Naive thymus-derived CD8-positive, alpha-beta T cell (primary cell): ENCODE measurements at regions of chr18 and their contacts with region 1.

Region 1: DNA sequence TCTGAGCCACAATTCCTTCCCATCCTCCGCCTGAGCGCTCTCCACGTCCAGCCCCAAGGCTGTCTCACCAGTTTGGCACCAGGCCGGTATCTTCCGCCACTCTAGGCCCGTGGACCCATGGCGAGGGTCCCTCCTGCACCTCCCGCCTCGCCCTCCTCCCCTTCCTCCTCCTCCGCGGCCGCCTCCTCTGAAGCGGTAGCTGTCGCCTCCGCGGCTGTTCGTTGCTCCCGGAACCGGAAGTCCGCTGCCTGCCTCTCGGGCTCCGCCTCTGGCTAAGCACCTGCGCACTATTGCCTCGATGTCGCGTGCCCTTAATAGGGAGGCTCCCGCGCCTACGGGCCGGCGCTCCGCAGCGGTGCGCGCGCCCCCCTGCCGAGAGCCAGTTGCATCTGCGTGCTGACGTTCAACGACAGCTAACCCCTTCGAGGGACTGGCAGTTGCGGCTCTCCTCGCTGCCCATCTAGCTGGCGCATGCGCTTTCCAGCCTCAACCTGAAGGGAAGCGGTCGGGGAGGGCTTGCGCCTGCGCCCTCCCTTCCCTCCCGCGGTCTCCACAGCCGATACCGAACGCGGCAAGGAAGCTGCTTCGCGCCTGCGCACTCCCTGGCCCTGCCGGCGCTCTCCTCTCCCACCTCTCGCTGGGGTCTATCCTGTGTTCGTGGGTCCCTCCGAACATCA is at the start of gene MBD1:
- DNase-seq: peak; percentile 93 to 99 (median 96)
- ATAC-seq: peak; percentile 91 to 93
- H3K4me3 Mint-ChIP-seq: peak within 1 kb of the TSS; percentile 94 to 99 (median 97)
- H3K27ac Mint-ChIP-seq: peak within 1 kb of the TSS; percentile 94 to 99 (median 98)
- H3K4me1 Mint-ChIP-seq: peaks cover 33 to 60% (median 45%) of the 10 kb centered on the region in 4 donors
- H3K27me3 Mint-ChIP-seq: no peaks in the 10 kb centered on the region
- polyA plus RNA-seq, gene MBD1: 22.5 to 39.9 (median 25.2) TPM

Region 2: DNA sequence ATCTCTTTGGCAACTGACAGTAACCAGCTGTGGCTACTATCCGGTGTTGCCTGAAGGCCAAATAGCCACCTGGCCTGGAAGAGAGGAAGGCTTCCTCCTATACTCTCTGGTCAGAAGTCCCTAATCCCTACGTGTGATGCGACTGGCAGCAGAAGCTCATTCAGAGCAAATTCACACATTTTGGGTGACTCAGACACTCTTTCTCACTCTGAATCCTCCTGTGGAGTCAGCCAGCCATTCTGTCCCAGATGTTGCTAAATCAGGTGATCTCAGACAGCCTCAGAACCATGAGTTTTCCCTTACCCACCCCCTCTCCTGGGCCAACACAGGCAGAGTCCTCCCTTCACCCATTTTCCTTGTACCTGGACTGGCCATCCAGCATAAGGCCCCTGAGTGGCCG is 49.8 kb before region 1 on chr18:
- POLR2A ChIA-PET with region 1: no interaction called
- DNase-seq: no peak
- ATAC-seq: no peak
- H3K4me3 Mint-ChIP-seq: no peak overlapping the region
- H3K27ac Mint-ChIP-seq: no peak overlapping the region
- H3K4me1 Mint-ChIP-seq: no peaks in the 10 kb centered on the region
- H3K27me3 Mint-ChIP-seq: peaks cover 0 to 29% (median 22%) of the 10 kb centered on the region in 5 donors

Region 3: GRCh38 chr18:50266248-50266704 is 15.2 kb before region 1 on chr18 and contains the start of gene CFAP53:
- POLR2A ChIA-PET with region 1: interaction called, 29 read pairs
- DNase-seq: peak; percentile 63 to 93 (median 84)
- ATAC-seq: peak; percentile 83 to 87
- H3K4me3 Mint-ChIP-seq: peak within 1 kb of the TSS; percentile 81 to 97 (median 91)
- H3K27ac Mint-ChIP-seq: peak within 1 kb of the TSS; percentile 54 to 95 (median 93)
- H3K4me1 Mint-ChIP-seq: peaks cover 6 to 28% (median 22%) of the 10 kb centered on the region in 4 donors
- H3K27me3 Mint-ChIP-seq: peaks cover 0 to 1% (median 0%) of the 10 kb centered on the region in 5 donors
- polyA plus RNA-seq, gene CFAP53: 0.31 to 0.57 TPM in 2 of 3 donors, not detected in the other